Activated T-helper 1 cell treated with anti-CD3 and anti-CD28 coated beads, Interleukin-12 subunit alpha, Interleukin-12 subunit beta, Interleukin-2, Interleukin-4 antibody, amounts not matched to agents 30 ng/mL and 10 ng/mL and 1 ng/mL, durations not matched to agents 14 hours and 24 hours and 36 hours (primary cell): ENCODE measurements at regions of chr17 and their contacts with region 1.

Region 1: DNA sequence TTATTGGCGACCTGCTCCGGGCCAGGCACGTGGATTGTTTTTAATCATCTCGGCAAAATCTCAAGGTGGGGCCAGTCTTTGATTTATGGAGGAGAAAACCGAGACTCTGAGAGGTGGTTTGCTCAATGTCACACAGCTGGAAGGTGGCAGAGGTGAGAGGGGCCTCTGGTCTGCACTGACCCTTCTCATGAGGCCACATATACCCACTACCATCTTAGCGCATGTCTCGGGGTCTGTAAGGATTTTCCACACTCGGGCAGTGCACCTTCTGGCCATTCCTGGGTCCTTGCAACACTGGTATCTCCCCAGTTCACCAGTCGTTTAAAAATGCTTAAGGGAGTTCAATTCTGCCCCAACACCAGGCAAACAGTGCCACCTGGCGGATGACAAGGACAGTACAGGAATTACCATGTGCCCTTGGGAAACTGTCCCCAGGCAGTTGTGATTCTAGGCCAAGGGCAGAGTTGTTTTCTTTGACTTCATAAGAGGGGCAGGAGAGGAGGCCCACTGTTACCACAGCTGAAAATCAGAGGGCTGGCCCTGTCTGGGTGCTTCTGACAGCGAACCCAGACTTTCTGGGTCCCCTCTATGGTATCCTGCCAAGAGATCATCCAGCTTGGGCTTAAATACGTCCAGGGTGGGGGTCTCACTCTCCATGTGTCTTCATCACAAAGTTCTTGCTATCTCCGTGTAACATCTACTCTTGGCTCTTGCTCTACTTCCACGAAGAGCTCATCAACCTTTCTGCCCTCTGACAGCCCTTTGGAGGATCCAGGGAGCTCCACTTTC is 39.4 kb upstream of the RAI1 start:
- DNase-seq: peak; percentile 67
- H3K4me3 Mint-ChIP-seq: no peak overlapping the region
- H3K27ac Mint-ChIP-seq: no peak overlapping the region
- H3K4me1 Mint-ChIP-seq: no peaks in the 10 kb centered on the region
- H3K27me3 Mint-ChIP-seq: peaks cover 7% of the 10 kb centered on the region

Region 2: GRCh38 chr17:17440010-17440843 is 201.6 kb before region 1 on chr17:
- intact Hi-C with region 1: loop called (anchors 5 kb)
- DNase-seq: peak; percentile 48
- H3K4me3 Mint-ChIP-seq: no peak overlapping the region
- H3K27ac Mint-ChIP-seq: no peak overlapping the region
- H3K4me1 Mint-ChIP-seq: no peaks in the 10 kb centered on the region
- H3K27me3 Mint-ChIP-seq: no peaks in the 10 kb centered on the region

Region 3: DNA sequence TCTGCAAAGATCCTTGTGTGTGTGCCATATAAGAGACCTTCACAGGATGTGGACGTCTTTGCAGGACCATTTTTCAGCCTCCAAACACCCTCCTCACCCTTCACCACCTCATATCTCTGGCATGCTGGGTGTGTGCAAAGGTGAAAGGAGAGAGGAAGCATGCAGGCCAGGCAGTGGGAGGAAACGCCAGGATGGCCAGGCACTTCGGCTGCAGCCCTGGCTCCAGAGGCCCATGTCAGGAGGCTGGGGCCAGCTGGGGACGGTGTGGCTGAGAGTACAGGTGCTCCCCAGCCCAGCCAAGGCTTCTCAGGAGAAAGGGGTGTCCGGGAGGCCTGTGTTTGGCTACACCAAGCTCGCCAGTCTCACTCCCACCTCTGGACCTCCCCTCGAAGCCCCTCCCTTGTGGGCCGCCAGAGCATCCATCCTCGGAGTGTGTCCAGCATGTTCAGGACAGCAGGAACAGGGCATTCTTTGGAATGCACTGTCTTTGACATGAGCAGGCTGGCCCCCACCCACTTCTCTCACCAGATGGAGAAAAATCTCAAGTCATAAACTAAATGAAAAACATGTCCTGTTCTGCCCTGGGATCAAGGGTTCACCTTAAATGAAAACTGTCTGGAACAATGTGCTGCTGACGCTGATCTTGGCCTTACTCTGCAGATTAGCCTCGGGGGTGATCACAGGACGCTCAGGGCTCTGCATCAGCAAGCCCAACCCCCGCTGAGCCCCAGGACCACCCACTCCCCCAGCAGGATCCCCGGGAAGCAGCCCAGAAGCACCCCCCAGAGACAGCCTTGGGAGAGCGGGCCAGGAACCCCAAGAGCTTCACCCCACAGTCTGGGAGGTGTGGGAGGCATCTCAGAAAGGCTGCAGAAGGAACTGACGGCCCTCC is 66.2 kb before region 1 on chr17:
- intact Hi-C with region 1: no loop called
- DNase-seq: no peak
- H3K4me3 Mint-ChIP-seq: no peak overlapping the region
- H3K27ac Mint-ChIP-seq: no peak overlapping the region
- H3K4me1 Mint-ChIP-seq: no peaks in the 10 kb centered on the region
- H3K27me3 Mint-ChIP-seq: no peaks in the 10 kb centered on the region